ENCODE measurements at regions of chr4 and their contacts with region 1.

Region 1: DNA sequence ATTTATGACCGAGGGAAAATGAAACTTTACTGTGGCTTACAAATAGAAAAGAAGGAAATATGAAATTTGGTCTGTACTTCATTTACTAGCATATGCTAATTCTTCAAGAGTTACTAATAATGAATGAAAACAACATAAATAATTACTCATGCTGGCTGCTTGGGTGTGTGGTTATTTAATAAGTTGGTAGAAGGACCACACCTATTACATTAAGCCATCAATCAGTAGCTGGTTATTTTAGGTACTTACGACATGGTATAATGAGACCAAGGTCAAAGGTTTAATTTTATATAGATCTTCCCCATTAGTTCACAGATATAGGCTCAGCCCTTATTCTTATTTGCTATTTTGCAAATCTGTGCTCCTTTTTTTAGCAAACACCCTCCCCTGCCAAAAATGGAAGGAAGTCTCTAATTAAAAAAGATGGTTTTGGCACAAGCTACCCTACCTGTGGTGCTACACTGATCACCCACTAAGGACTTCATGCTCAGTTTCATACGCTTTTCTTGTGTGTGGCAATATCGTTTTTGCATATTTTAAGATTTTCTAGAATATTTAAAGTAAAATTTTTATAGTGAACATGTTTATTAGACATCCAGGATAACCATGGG is 14.1 kb downstream of the TMPRSS11D start:
- DNase-seq: no peak
- ATAC-seq: no peak

Region 2: GRCh38 chr4:66465111-66465510 is 1404.6 kb before region 1 on chr4:
- intact Hi-C with region 1: loop called (anchors 5 kb)
- DNase-seq: no peak
- ATAC-seq: no peak